ENCODE measurements at regions of chr1 and their contacts with region 1.

Region 1: DNA sequence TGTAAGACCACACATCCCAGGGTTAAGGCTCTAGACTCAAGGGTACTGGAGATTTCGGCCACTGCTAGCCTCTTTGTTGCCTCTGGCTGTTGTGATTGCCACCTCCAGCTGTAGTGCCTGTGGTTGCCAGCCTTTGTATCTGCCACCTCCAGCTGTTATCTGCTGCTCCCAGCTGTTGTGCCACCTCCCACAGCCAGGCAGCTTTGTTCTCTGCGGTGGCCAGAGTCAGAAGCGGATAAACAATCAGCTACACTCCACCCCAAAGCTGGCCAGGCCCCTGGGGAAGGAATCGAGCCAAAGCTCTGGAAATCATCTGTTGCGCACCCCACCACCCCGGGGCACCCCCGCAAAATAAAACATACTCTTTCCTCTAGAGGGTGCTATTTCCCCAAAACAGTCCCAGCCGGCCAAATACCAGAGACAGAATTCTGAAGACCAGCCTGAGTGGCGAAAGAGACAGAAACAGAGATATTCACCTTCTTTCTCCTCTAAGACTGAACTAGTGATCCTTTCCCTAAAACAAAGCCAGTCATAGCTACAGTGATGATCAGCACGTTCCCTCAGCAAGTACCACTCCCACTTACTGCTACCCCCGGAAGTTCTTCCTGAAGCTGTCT is 14.8 kb upstream of the PIGM start:
- DNase-seq: peak; percentile 91 to 98 (median 96)
- H3K4me3 ChIP-seq: peak overlapping the region in 5 of 7 experiments; percentile 8 to 70 (median 33)
- H3K27ac ChIP-seq: no peak overlapping the region
- H3K4me1 ChIP-seq: peaks cover 5 to 25% (median 15%) of the 10 kb centered on the region in 4 experiments
- H3K27me3 ChIP-seq: peaks cover 0 to 7% (median 0%) of the 10 kb centered on the region in 5 experiments

Region 2: DNA sequence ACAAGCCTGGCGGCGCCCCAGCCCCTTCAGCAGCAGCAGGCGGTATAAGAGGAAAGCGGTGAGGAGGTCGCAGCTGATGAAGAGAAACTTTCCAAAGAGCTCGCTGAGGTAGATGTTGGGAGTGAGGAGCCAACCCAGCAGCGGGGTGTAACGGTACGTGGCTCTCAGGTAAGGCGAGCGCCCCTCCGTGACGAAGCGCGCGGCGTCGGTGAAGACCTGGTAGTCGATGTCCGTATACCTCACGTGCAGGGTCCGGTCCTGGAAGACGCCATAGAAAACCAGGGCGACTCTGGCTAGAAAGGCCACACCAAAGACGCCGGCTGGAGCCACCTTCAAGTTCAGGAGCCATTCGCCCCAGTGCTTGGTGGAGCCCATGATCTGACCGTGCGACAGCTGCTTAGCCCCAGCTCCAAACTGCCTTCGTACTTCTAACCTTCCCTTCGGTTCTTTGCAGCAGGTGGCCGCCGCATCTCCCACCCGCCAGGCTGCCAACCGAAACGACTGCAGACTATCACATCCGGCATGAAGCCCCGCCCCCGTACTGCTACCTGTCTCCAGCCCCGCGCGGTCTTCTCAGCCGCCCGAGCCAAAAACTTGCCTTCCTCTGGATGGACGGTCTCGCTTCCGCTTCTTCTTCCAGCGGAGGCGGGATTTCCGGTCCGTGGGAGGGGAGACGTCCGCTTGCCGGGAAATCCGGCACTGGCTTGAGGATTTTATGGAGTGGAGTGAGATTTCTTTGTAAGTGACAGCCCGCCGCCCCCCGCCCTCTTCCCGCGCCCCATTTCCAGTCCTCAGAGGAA is 15.0 kb before region 1 on chr1 and contains the start of gene PIGM:
- CTCF ChIA-PET with region 1: interaction called, 26 read pairs
- POLR2A ChIA-PET with region 1: interaction called, 5 read pairs
- DNase-seq: peak; percentile 89 to 92 (median 91)
- H3K4me3 ChIP-seq: peak within 1 kb of the TSS; percentile 61 to 95 (median 89)
- H3K27ac ChIP-seq: peak within 1 kb of the TSS in 1 of 2 experiments; percentile 39
- H3K4me1 ChIP-seq: peaks cover 10 to 34% (median 24%) of the 10 kb centered on the region in 4 experiments
- H3K27me3 ChIP-seq: no peaks in the 10 kb centered on the region

Region 3: GRCh38 chr1:160058087-160058486 is 11.5 kb after region 1 on chr1:
- CTCF ChIA-PET with region 1: interaction called, 22 read pairs
- POLR2A ChIA-PET with region 1: interaction called, 3 read pairs
- DNase-seq: no peak
- H3K4me3 ChIP-seq: no peak overlapping the region
- H3K27ac ChIP-seq: no peak overlapping the region
- H3K4me1 ChIP-seq: no peaks in the 10 kb centered on the region
- H3K27me3 ChIP-seq: peaks cover 0 to 8% (median 0%) of the 10 kb centered on the region in 5 experiments

Region 4: GRCh38 chr1:160070243-160071163 is 23.9 kb after region 1 on chr1:
- CTCF ChIA-PET with region 1: interaction called, 100 read pairs
- POLR2A ChIA-PET with region 1: no interaction called
- DNase-seq: peak; percentile 65 to 84 (median 79)
- H3K4me3 ChIP-seq: peak overlapping the region; percentile 32 to 93 (median 77)
- H3K27ac ChIP-seq: no peak overlapping the region
- H3K4me1 ChIP-seq: peaks cover 6 to 13% (median 8%) of the 10 kb centered on the region in 4 experiments
- H3K27me3 ChIP-seq: peaks cover 6 to 30% (median 23%) of the 10 kb centered on the region in 5 experiments

Region 5: DNA sequence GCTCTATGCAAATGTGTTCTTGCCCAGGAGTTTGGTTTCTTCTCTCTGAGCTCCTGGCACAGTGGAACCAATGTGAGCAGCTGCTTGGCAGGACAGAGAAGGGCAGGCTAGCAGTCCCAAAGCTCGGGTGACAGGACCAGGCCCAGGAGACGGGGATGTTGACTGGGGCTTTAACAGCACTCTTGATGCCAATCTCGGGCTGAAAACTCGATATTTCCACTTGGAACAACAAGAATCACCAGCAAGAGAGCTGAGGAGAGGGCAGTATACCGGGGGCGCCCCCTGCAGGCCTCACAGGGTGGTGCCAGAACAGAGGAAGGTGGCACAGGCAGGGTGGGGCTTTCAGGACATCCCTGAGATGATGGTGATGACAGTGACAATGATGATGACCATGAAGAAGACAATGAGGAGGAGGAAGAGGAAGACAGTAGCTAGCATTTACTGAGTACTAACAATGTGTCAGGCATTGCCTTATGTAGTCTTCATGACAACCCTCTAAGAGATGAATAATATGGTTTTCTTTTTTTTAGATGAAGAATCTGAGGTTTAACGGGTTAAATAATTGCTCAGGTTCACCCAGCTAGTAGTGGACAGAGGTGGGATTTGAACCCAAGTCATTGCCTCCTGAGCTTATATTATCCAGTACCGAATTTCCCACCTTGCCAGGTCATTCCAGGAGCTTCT is 32.1 kb after region 1 on chr1:
- CTCF ChIA-PET with region 1: interaction called, 100 read pairs
- POLR2A ChIA-PET with region 1: no interaction called
- DNase-seq: peak; percentile 47 to 65 (median 60)
- H3K4me3 ChIP-seq: no peak overlapping the region
- H3K27ac ChIP-seq: no peak overlapping the region
- H3K4me1 ChIP-seq: peaks cover 0 to 3% (median under 1%) of the 10 kb centered on the region in 4 experiments
- H3K27me3 ChIP-seq: peaks cover 9 to 50% (median 38%) of the 10 kb centered on the region in 5 experiments

Region 6: DNA sequence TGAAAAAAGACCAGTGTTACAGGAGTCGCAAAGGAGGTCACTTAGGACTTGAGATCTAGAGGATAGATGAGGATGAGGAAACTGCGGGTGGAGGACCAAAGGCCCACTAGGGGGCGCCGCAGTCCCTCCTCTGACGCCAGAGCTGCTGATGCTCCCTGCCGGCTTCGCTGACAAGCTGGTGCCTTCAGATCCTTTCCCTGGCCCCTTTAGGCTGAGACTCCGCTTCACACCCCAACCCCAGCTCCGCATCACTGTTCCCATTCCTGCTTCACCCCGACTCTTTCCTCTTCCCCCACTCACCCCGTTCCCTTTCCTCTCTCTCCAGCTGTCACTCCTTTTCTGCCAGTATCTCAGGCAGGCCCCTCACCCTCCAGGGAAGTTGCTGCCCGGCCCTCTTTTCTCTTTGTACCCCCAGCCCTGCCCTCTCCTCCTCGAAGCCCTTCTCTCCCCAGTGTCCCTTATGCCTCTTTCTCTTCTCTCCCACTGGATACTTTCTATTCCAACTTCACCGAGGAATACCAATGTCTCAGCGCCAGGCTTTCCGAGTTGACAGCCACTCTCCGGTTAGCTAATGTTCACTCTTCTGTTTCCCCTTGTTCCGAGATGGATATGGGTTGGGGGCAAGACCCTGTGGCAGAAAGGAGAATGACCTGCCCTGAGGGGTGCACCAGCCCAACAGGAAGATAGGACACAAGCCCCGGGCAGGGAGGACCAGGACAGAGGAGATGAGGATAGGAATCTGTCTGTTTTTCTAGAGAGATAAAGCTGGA is 39.3 kb after region 1 on chr1:
- CTCF ChIA-PET with region 1: interaction called, 100 read pairs
- POLR2A ChIA-PET with region 1: no interaction called
- DNase-seq: peak; percentile 81 to 86 (median 81)
- H3K4me3 ChIP-seq: no peak overlapping the region
- H3K27ac ChIP-seq: no peak overlapping the region
- H3K4me1 ChIP-seq: peaks cover 0 to 9% (median 7%) of the 10 kb centered on the region in 4 experiments
- H3K27me3 ChIP-seq: peaks cover 1 to 36% (median 23%) of the 10 kb centered on the region in 5 experiments

Region 7: GRCh38 chr1:160098852-160099561 is 52.4 kb after region 1 on chr1:
- CTCF ChIA-PET with region 1: interaction called, 13 read pairs
- POLR2A ChIA-PET with region 1: interaction called, 3 read pairs
- DNase-seq: peak; percentile 92 to 96 (median 95)
- H3K4me3 ChIP-seq: peak overlapping the region; percentile 37 to 89 (median 71)
- H3K27ac ChIP-seq: peak overlapping the region; percentile 41 to 87
- H3K4me1 ChIP-seq: peaks cover 0 to 48% (median 35%) of the 10 kb centered on the region in 4 experiments
- H3K27me3 ChIP-seq: no peaks in the 10 kb centered on the region

Region 8: DNA sequence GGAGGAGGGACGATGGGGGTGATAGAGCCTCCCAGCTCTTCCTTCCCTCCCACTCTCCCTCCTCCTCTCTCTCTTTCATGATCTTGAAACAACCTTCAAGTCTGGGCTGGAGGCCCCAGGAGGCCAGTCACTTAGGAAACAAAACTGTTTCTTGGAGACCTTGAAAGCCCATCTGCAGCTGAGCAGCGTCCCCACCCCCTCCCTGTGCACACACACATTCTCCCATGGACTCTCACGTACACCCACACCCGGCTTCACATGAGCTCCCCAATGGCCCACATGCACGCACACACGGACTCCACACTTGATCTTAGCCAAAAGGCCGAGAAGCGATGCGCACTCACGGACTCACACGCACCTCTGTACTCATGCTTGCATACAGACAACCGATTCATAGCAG is 65.8 kb after region 1 on chr1:
- CTCF ChIA-PET with region 1: no interaction called
- POLR2A ChIA-PET with region 1: no interaction called
- DNase-seq: no peak
- H3K4me3 ChIP-seq: no peak overlapping the region
- H3K27ac ChIP-seq: no peak overlapping the region
- H3K4me1 ChIP-seq: no peaks in the 10 kb centered on the region
- H3K27me3 ChIP-seq: peaks cover 0 to 2% (median 0%) of the 10 kb centered on the region in 5 experiments